ENCODE measurements at regions of chr18 and their contacts with region 1.

Region 1: GRCh38 chr18:41416044-41416443 is 539.0 kb upstream of the PIK3C3 start:
- DNase-seq: no peak
- ATAC-seq: no peak
- H3K4me3 ChIP-seq: no peak overlapping the region
- H3K27ac ChIP-seq: no peak overlapping the region
- H3K4me1 ChIP-seq: no peaks in the 10 kb centered on the region
- H3K27me3 ChIP-seq: no peaks in the 10 kb centered on the region
- CTCF ChIP-seq: no peak

Region 2: GRCh38 chr18:39701839-39702238 is 1714.2 kb before region 1 on chr18:
- intact Hi-C with region 1: loop called in 1 of 10 experiments (anchors 10 kb)
- DNase-seq: no peak
- ATAC-seq: no peak
- H3K4me3 ChIP-seq: no peak overlapping the region
- H3K27ac ChIP-seq: no peak overlapping the region
- H3K4me1 ChIP-seq: no peaks in the 10 kb centered on the region
- H3K27me3 ChIP-seq: no peaks in the 10 kb centered on the region
- CTCF ChIP-seq: no peak

Region 3: GRCh38 chr18:41466436-41467160 is 50.6 kb after region 1 on chr18:
- intact Hi-C with region 1: no loop called
- DNase-seq: no peak
- ATAC-seq: no peak
- H3K4me3 ChIP-seq: no peak overlapping the region
- H3K27ac ChIP-seq: no peak overlapping the region
- H3K4me1 ChIP-seq: no peaks in the 10 kb centered on the region
- H3K27me3 ChIP-seq: no peaks in the 10 kb centered on the region
- CTCF ChIP-seq: no peak

Region 4: DNA sequence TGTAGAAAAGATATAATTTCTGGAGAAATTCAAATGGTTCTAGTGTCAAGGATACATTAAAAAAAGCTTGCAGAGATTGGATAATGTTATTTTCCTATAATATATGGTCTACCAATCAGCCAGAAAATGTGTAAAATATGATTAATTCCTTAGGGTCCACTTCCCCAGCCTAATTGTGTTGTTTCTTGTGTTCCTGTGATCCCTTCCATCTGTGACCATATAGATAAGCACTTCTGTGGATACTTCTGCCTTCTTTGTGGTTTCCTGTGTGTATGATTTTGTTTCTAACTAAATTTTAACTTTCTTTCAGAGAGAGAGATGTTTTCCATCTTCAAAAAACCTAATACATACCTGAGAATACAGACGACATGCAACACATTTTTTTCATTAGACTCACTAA is 171.9 kb after region 1 on chr18:
- intact Hi-C with region 1: no loop called
- DNase-seq: no peak
- ATAC-seq: no peak
- H3K4me3 ChIP-seq: no peak overlapping the region
- H3K27ac ChIP-seq: no peak overlapping the region
- H3K4me1 ChIP-seq: no peaks in the 10 kb centered on the region
- H3K27me3 ChIP-seq: no peaks in the 10 kb centered on the region
- CTCF ChIP-seq: no peak

Region 5: GRCh38 chr18:41721103-41721790 is 305.2 kb after region 1 on chr18:
- intact Hi-C with region 1: no loop called
- DNase-seq: no peak
- ATAC-seq: no peak
- H3K4me3 ChIP-seq: no peak overlapping the region
- H3K27ac ChIP-seq: no peak overlapping the region
- H3K4me1 ChIP-seq: no peaks in the 10 kb centered on the region
- H3K27me3 ChIP-seq: no peaks in the 10 kb centered on the region
- CTCF ChIP-seq: no peak